PC-3 (cell line): ENCODE measurements at regions of chr10 and their contacts with region 1.

Region 1: DNA sequence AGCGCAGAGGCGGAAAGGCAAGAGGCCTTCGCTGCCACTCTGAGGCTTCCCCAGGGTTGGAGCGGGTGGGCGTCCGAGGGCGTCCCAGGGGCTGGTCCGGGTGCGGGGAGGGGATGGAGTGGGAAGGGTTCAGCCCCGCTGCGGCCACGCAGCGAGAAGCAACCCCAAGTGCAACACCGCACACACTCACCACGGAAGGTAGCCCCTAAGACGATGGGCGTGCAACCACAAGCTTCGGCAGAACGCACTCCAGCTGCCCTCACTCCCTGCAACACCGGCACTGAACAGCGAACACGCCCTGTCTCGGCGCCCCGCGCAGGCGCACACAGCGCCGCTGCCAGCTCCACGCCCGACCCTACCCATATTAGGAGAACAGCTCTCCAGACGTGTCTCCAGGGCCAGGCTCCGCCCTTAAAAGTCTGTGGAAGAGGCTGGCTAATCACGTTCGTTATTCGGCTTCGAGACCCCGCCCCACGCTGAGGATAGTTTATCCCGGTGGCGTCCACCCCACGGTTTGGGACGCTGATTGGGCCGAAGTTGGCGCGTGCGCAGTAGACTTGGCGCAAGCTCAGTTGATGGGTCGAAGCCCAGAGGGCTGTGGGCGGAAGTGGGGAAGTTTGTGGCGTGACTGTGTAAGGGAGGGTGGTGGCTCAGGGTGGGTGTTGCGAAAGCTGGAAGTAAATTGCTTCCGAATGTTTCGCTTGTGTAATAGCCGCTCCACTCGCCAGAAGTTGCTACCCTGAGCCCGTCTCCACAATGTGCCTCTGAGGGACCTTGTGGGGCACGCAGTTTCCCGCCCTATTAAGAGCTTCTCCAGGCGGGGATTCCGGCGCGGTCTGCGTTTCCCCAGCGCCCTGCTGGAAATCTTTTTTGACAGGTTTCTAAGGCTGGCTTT is at the start of gene RSU1:
- DNase-seq: peak; percentile 94
- ATAC-seq: peak; percentile 95
- H3K4me3 ChIP-seq: peak within 1 kb of the TSS; percentile 91
- H3K27ac ChIP-seq: peak within 1 kb of the TSS; percentile 71
- H3K4me1 ChIP-seq: peaks cover 8% of the 10 kb centered on the region; the same call in 1 of the 2 replicates
- H3K27me3 ChIP-seq: no peaks in the 10 kb centered on the region
- CTCF ChIP-seq: no peak
- total RNA-seq, gene RSU1: 21.2 and 26.0 TPM in 2 replicates

Region 2: DNA sequence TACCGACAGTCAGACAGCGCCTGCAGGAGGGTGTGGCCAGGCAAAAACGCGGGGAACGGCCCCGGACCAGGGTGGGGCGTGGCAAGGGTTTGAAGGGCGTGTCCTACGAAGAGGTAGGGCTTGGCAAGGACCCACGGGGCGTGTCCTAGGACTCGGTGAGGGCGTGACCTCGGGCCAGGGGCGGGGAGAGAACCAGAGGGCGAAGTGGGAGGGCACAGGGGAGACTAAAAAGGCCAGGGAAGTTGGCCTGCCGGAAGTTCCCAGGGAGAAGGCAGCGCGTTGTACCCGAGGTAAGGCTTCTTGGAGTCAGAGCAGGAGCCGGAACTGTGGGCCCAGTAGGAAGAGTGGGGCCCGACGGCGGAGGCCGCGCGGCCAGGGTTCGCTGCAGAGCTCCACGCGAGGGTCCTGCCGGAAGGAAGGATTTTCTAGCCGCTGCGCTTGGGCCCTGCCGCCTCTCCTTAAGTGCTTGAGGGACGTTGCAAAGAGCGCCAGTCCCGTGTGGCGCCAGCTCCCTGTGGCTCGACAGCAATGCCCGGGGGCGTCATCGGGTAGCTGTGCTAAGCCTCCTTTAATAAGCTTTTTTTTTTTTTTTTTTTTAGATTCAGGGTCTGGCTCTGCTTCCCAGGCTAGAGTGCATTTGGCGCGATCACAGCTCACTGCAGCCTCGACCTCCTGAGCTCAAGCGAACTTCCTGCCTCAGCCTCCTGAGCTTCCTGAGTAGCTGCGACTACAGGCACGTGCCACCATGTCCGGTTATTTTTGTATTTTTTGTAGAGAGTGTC is 380.4 kb before region 1 on chr10 and contains the start of gene PTER:
- CTCF ChIA-PET with region 1: no interaction called
- POLR2A ChIA-PET with region 1: no interaction called
- intact Hi-C with region 1: loop called (anchors 2 kb)
- DNase-seq: peak; percentile 85
- ATAC-seq: peak; percentile 92
- H3K4me3 ChIP-seq: peak within 1 kb of the TSS; percentile 70
- H3K27ac ChIP-seq: peak within 1 kb of the TSS; percentile 34; the same call in 1 of the 2 replicates
- H3K4me1 ChIP-seq: peaks cover 28% of the 10 kb centered on the region; the same call in 1 of the 2 replicates
- H3K27me3 ChIP-seq: no peaks in the 10 kb centered on the region
- CTCF ChIP-seq: no peak
- total RNA-seq, gene PTER: 6.6 and 9.3 TPM in 2 replicates

Region 3: DNA sequence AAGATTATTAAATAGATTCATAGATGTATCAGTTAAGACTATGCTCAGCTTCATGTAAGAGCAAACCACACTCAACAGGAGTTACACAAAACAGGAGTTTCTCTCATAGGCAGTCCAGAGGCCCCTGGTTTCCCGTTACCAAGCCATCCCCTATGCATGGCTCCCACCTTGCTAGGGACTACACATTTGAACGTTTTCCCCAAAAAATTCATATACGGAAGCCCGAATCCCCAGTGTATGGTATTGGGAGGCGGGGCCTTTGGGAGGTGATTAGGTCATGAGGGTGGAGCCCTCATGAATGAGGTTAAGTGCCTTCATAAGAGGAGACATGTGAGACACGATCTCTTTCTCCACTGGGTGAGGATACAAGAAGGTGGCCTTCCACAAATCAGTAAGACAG is 29.2 kb before region 1 on chr10:
- CTCF ChIA-PET with region 1: no interaction called
- POLR2A ChIA-PET with region 1: interaction called, 12 read pairs
- intact Hi-C with region 1: no loop called
- DNase-seq: no peak
- ATAC-seq: no peak
- H3K4me3 ChIP-seq: no peak overlapping the region
- H3K27ac ChIP-seq: no peak overlapping the region
- H3K4me1 ChIP-seq: no peaks in the 10 kb centered on the region
- H3K27me3 ChIP-seq: no peaks in the 10 kb centered on the region
- CTCF ChIP-seq: no peak

Region 4: DNA sequence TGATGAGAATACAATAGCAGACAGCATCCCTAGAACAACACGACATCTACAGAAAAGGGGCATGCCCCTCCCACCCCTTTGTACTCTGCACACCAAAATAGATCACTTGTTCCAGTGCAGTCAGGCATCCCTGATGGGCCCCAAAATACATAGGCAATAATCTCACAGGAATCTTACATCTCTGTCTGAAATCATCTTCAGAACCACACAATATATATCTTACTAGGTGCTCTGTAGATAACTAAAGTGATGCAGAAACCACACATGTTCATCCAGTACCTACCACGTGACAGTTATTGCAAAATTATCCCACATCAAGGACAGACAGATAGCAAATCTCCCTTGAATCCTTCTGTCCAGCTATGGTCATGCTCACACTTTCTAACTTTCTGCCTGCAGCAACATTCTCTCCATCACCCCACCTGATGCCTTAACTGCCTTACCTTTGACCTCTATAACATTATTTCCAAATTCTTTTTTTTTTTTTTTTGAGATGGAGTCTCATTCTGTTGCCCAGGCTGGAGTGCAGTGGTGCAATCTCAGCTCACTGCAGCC is 606.3 kb after region 1 on chr10:
- CTCF ChIA-PET with region 1: interaction called, 12 read pairs
- POLR2A ChIA-PET with region 1: no interaction called
- intact Hi-C with region 1: no loop called
- DNase-seq: no peak
- ATAC-seq: no peak
- H3K4me3 ChIP-seq: no peak overlapping the region
- H3K27ac ChIP-seq: no peak overlapping the region
- H3K4me1 ChIP-seq: no peaks in the 10 kb centered on the region
- H3K27me3 ChIP-seq: no peaks in the 10 kb centered on the region
- CTCF ChIP-seq: no peak